GM12878 (cell line): ENCODE measurements at regions of chr3 and their contacts with region 1.

Region 1: DNA sequence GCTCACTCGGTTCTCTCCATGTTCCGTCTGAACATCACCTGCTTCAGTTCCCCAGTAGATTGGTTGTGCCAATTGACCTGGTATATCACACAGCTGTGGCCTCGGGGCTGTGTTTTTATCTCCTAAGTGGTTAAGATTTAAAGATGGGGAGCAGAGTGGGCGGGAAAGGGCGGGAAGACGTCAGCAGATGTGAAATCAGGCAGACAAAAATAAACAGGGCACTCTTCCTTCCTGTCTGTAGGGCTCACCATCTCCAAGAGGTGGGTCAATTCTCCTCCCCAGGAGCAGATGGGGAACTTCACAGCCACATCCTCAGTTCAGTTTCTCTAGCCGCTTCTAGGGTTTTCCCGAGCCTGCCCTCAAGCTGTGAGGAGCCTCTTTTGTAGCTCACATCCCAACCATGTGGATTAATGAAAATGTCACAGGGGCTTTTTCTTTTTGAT is 26.8 kb upstream of the LIMD1 start:
- DNase-seq: peak; percentile 84
- ATAC-seq: peak; percentile 83
- H3K4me3 ChIP-seq: no peak overlapping the region
- H3K27ac ChIP-seq: peak overlapping the region; percentile 66
- H3K4me1 ChIP-seq: peaks cover 54% of the 10 kb centered on the region
- H3K27me3 ChIP-seq: no peaks in the 10 kb centered on the region
- CTCF ChIP-seq: no peak
- EP300 ChIP-seq: peak; percentile 32 to 76; a peak in 2 of 4 replicates
- POLR2A ChIP-seq: no peak; the same call in 1 of the 2 replicates
- RAD21 ChIP-seq: no peak

Region 2: DNA sequence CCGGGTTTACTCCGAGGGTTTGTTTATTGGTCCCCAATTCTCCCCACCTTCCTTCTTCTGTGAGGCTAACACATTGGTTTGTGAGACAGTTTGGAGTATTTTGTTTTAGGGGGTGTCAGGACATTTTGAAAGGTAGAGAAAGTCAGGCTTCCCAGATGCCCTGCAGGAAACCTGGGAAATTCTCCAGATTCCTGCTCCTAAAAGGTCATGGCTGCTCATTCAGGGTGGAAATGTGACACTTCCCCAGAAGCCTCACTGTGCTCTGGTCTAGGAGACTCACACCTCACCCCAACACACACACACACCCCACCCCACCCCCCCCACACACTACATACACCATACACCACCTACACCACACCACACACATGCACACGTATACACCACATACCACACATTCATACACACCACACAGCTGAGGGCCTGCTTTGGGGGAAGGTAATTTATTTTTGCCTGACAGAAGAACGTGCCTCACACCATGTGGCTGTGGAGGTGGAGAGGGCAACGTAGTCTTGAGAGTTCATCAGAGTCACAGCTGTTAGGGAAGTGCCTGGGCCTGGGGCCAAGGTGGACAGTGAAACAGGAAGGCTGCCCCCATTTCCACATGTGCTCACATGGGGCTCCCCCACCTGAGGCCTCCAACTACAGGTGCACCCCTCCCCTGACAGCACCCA is 13.6 kb before region 1 on chr3:
- CTCF ChIA-PET with region 1: interaction called, 9 read pairs
- POLR2A ChIA-PET with region 1: interaction called, 6 read pairs
- RAD21 ChIA-PET with region 1: interaction called, 4 read pairs
- SMC1A ChIA-PET with region 1: interaction called, 41 read pairs
- in situ Hi-C with region 1: no loop called
- intact Hi-C with region 1: loop called (anchors 1 kb)
- DNase-seq: peak; percentile 68
- ATAC-seq: peak; percentile 78
- H3K4me3 ChIP-seq: no peak overlapping the region
- H3K27ac ChIP-seq: peak overlapping the region; percentile 55
- H3K4me1 ChIP-seq: peaks cover 33% of the 10 kb centered on the region
- H3K27me3 ChIP-seq: no peaks in the 10 kb centered on the region
- CTCF ChIP-seq: no peak
- EP300 ChIP-seq: peak; percentile 82 to 84; a peak in 3 of 4 replicates
- POLR2A ChIP-seq: no peak
- RAD21 ChIP-seq: no peak

Region 3: DNA sequence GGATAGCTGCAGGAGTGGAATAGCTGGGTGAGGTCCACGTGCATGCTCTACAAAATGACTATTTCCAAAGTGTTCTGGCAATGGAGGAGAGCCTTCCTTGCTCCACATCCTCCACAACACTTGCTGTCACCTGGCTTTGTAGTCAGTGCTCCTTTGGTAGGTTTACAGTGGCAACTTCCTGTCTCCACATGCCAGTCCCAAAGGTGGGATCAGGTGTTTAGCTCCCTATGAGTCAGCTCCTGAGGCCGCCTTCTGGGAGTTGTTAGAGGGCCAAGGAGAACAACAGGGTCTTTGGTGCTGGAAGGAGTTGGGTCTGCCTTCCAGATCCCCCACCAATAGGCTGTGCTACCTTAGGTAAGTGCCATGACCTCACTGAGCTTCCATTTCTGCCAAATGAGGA is 11.5 kb after region 1 on chr3:
- CTCF ChIA-PET with region 1: interaction called, 6 read pairs
- POLR2A ChIA-PET with region 1: interaction called, 4 read pairs
- RAD21 ChIA-PET with region 1: no interaction called
- SMC1A ChIA-PET with region 1: interaction called, 11 read pairs
- in situ Hi-C with region 1: no loop called
- intact Hi-C with region 1: no loop called
- DNase-seq: no peak
- ATAC-seq: no peak
- H3K4me3 ChIP-seq: no peak overlapping the region
- H3K27ac ChIP-seq: no peak overlapping the region
- H3K4me1 ChIP-seq: no peaks in the 10 kb centered on the region
- H3K27me3 ChIP-seq: no peaks in the 10 kb centered on the region
- CTCF ChIP-seq: no peak
- EP300 ChIP-seq: no peak
- POLR2A ChIP-seq: no peak
- RAD21 ChIP-seq: no peak